Posterior vena cava (tissue), 2 donors: ENCODE measurements at regions of chr1 and their contacts with region 1.

Region 1: DNA sequence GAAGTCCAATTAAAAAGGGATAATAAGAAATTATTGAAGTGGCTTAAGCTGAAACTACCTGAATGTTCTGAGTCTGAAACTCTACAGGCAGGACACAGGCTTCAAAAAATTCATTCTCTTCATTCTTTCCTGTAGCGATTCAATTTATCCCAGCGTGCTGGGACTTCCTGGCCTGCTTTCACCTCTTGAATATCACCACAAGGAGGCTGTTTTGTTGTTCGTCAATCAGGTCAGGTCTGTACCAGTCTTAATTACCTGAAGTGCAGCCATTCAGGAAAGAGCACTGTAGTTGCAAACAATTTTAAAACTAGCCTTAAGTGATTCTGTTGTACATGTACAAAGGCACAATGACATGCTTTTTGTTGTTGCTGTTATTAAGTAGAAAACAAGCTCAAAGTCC is 38.4 kb downstream of the FYB2 start:
- DNase-seq: no peak

Region 2: GRCh38 chr1:56948403-56949023 is 167.7 kb after region 1 on chr1:
- intact Hi-C with region 1: no loop called
- DNase-seq: no peak

Region 3: GRCh38 chr1:57949168-57949567 is 1168.3 kb after region 1 on chr1:
- intact Hi-C with region 1: loop called in 1 of 2 experiments (anchors 5 kb)
- DNase-seq: no peak